MCF 10A (cell line): ENCODE measurements at regions of chr9 and their contacts with region 1.

Region 1: GRCh38 chr9:68584189-68585033 is 43.7 kb upstream of the TMEM252 start:
- DNase-seq: peak; percentile 86
- H3K4me3 Mint-ChIP-seq: no peak overlapping the region
- H3K27ac Mint-ChIP-seq: no peak overlapping the region
- H3K4me1 Mint-ChIP-seq: no peaks in the 10 kb centered on the region
- H3K27me3 Mint-ChIP-seq: peaks cover 43% of the 10 kb centered on the region
- CTCF ChIP-seq: peak; percentile 97

Region 2: DNA sequence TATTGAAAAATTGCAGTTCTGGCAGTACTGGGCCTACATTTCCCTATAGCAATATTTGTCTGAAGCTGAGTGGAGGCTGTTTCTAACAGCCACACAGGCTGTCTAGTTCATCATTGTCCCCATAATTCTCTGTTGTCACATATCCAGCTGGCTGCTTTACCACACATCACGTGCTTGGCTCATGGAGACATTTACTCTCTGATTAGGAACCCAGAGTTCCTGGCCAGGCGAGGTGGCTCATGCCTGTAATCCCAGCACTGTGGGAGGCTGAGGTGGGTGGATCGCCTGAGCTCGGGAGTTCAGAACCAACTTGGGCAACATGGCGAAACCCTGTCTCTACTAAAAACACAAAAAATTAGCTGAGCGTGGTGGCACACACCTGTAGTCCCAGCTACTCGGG is 146.6 kb before region 1 on chr9:
- CTCF ChIA-PET with region 1: no interaction called
- POLR2A ChIA-PET with region 1: no interaction called
- intact Hi-C with region 1: no loop called
- DNase-seq: no peak
- H3K4me3 Mint-ChIP-seq: no peak overlapping the region
- H3K27ac Mint-ChIP-seq: no peak overlapping the region
- H3K4me1 Mint-ChIP-seq: no peaks in the 10 kb centered on the region
- H3K27me3 Mint-ChIP-seq: no peaks in the 10 kb centered on the region
- CTCF ChIP-seq: no peak

Region 3: GRCh38 chr9:68507130-68507805 is 77.1 kb before region 1 on chr9:
- CTCF ChIA-PET with region 1: interaction called, 10 read pairs
- POLR2A ChIA-PET with region 1: no interaction called
- intact Hi-C with region 1: no loop called
- DNase-seq: peak; percentile 36
- H3K4me3 Mint-ChIP-seq: no peak overlapping the region
- H3K27ac Mint-ChIP-seq: no peak overlapping the region
- H3K4me1 Mint-ChIP-seq: no peaks in the 10 kb centered on the region
- H3K27me3 Mint-ChIP-seq: no peaks in the 10 kb centered on the region
- CTCF ChIP-seq: peak; percentile 63

Region 4: DNA sequence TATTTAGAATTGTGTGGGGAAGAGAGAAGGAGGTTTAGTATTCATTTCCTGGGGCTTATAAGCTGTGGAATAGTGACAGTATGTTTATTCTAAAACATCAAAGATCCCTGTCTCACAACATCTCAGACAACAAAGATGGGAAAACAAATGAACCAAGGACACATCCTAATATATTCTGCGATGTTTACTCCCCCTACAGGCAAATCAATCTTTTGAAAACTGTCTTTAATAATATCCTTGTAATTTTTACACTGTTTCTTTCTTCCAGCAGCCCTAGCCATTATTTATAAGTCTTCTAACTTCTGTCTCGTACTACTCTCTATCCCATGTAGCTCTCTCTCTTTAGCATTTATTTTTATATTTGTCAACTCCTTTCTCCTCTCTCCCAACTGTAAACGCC is 10.3 kb before region 1 on chr9:
- CTCF ChIA-PET with region 1: interaction called, 20 read pairs
- POLR2A ChIA-PET with region 1: no interaction called
- intact Hi-C with region 1: no loop called
- DNase-seq: no peak
- H3K4me3 Mint-ChIP-seq: no peak overlapping the region
- H3K27ac Mint-ChIP-seq: no peak overlapping the region
- H3K4me1 Mint-ChIP-seq: no peaks in the 10 kb centered on the region
- H3K27me3 Mint-ChIP-seq: peaks cover 78% of the 10 kb centered on the region
- CTCF ChIP-seq: peak; percentile 13

Region 5: GRCh38 chr9:68643901-68644809 is 59.7 kb after region 1 on chr9:
- CTCF ChIA-PET with region 1: no interaction called
- POLR2A ChIA-PET with region 1: no interaction called
- intact Hi-C with region 1: no loop called
- DNase-seq: no peak
- H3K4me3 Mint-ChIP-seq: no peak overlapping the region
- H3K27ac Mint-ChIP-seq: no peak overlapping the region
- H3K4me1 Mint-ChIP-seq: no peaks in the 10 kb centered on the region
- H3K27me3 Mint-ChIP-seq: peaks cover 29% of the 10 kb centered on the region
- CTCF ChIP-seq: no peak

Region 6: GRCh38 chr9:68844631-68845612 is 260.5 kb after region 1 on chr9:
- CTCF ChIA-PET with region 1: interaction called, 3 read pairs
- POLR2A ChIA-PET with region 1: no interaction called
- intact Hi-C with region 1: loop called (anchors 1 kb)
- DNase-seq: peak; percentile 28
- H3K4me3 Mint-ChIP-seq: no peak overlapping the region
- H3K27ac Mint-ChIP-seq: no peak overlapping the region
- H3K4me1 Mint-ChIP-seq: no peaks in the 10 kb centered on the region
- H3K27me3 Mint-ChIP-seq: peaks cover 50% of the 10 kb centered on the region
- CTCF ChIP-seq: peak; percentile 24

Region 7: DNA sequence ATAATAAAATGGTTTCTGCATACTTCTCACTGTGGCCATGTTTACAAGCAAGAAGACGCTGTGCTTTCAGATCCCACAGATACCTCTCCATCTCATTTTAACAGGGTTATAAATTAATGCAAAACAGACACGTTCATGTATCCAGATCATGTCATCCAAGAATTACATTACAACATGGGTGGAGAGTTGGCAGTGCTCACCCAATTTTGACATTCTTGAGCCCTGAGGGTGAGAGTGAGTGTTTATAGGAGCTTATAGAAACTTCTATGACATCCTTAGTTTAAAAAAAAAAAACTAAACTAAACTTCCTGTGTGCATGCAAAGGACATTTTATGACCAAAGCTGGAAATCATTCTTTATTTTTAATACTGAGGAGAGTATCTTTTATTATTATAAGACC is 420.4 kb after region 1 on chr9:
- CTCF ChIA-PET with region 1: interaction called, 66 read pairs
- POLR2A ChIA-PET with region 1: no interaction called
- intact Hi-C with region 1: no loop called
- DNase-seq: peak; percentile 64
- H3K4me3 Mint-ChIP-seq: no peak overlapping the region
- H3K27ac Mint-ChIP-seq: no peak overlapping the region
- H3K4me1 Mint-ChIP-seq: peaks cover 6% of the 10 kb centered on the region
- H3K27me3 Mint-ChIP-seq: peaks cover 65% of the 10 kb centered on the region
- CTCF ChIP-seq: no peak

Region 8: DNA sequence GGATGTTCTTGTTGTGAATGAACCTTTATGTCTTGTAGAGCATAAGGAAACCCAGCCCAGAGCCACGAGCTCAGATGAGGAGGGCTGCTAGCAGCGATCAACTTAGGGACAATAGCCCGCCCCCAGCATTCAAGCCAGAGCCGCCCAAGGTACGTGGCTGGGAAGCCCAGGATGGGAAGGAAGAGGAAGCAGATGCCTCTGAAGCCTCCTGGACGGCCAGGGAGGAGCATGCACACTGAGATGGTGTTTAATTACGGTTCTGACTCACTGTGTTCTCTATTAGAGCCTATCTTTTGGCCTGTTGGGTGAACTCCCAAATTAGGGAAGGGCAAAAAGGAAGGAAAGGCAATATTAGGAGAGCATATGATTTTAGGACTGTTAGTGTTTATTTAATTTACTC is 664.9 kb after region 1 on chr9:
- CTCF ChIA-PET with region 1: no interaction called
- POLR2A ChIA-PET with region 1: no interaction called
- intact Hi-C with region 1: no loop called
- DNase-seq: peak; percentile 5
- H3K4me3 Mint-ChIP-seq: no peak overlapping the region
- H3K27ac Mint-ChIP-seq: no peak overlapping the region
- H3K4me1 Mint-ChIP-seq: peaks cover 12% of the 10 kb centered on the region
- H3K27me3 Mint-ChIP-seq: no peaks in the 10 kb centered on the region
- CTCF ChIP-seq: no peak